CD8-positive, alpha-beta T cell (primary cell): ENCODE measurements at regions of chr2 and their contacts with region 1.

Region 1: DNA sequence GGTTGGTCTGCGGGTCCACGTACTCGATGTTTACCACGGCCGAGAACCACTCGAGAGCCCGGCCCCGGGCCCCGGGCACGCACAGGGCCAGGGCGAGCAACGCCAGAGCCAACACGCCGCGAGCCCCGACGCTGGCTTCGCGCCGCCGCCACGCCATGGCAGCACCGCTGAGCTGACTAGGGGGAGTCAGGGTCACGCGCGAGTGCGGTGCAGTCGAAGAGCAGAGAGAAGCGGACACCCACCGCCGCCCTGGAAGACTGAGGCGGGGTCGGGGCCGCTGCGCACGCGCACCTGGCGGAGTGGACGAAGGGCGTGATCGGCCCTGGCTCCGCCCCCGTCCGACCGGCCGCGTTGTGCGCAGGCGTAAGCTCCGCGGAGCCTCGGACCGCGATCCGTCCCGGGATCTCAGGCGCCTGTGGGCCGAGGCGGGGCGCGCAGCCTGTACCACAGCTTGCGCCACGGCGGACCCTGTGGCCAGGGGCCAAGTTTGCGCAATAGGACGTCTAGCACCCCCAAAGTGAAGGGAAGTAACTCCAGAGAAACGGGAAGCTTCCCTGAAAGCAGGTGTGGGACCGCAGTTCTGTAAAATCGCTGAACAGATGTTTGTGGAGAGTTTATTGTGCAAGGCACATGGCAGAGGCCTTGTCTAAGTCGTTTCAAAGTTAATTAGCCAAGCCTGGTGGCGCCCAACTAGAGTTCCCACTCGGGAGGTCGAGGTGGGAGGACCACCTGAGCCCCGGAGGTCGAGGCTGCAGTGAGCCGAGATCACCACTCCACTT is at the start of gene RNF149:
- DNase-seq: peak; percentile 80 to 97 (median 93)
- ATAC-seq: peak; percentile 64
- H3K4me3 ChIP-seq: peak within 1 kb of the TSS; percentile 75 to 88
- H3K4me3 Mint-ChIP-seq: peak within 1 kb of the TSS; percentile 92
- H3K27ac ChIP-seq: peak within 1 kb of the TSS; percentile 81 to 90
- H3K27ac Mint-ChIP-seq: peak within 1 kb of the TSS; percentile 99
- H3K4me1 ChIP-seq: peaks cover 72% of the 10 kb centered on the region
- H3K4me1 Mint-ChIP-seq: peaks cover 78% of the 10 kb centered on the region
- H3K27me3 ChIP-seq: no peaks in the 10 kb centered on the region
- H3K27me3 Mint-ChIP-seq: no peaks in the 10 kb centered on the region
- CTCF ChIP-seq: no peak
- total RNA-seq, gene RNF149: 128 to 129 TPM

Region 2: GRCh38 chr2:100562732-100563720 is 745.6 kb before region 1 on chr2 and contains the start of gene PDCL3:
- CTCF ChIA-PET with region 1: no interaction called
- POLR2A ChIA-PET with region 1: interaction called, 3 read pairs
- intact Hi-C with region 1: loop called in 1 of 2 experiments (anchors 5 kb)
- DNase-seq: peak; percentile 88 to 98 (median 94)
- ATAC-seq: peak; percentile 88
- H3K4me3 ChIP-seq: peak within 1 kb of the TSS; percentile 69 to 89
- H3K4me3 Mint-ChIP-seq: peak within 1 kb of the TSS; percentile 97
- H3K27ac ChIP-seq: peak within 1 kb of the TSS; percentile 84 to 87
- H3K27ac Mint-ChIP-seq: peak within 1 kb of the TSS; percentile 99
- H3K4me1 ChIP-seq: peaks cover 18% of the 10 kb centered on the region
- H3K4me1 Mint-ChIP-seq: peaks cover 39% of the 10 kb centered on the region
- H3K27me3 ChIP-seq: no peaks in the 10 kb centered on the region
- H3K27me3 Mint-ChIP-seq: no peaks in the 10 kb centered on the region
- CTCF ChIP-seq: no peak
- total RNA-seq, gene PDCL3: 32.4 to 33.5 TPM

Region 3: GRCh38 chr2:100580367-100581276 is 728.0 kb before region 1 on chr2:
- CTCF ChIA-PET with region 1: no interaction called
- POLR2A ChIA-PET with region 1: no interaction called
- intact Hi-C with region 1: loop called in 1 of 2 experiments (anchors 10 kb)
- DNase-seq: peak; percentile 37 to 91 (median 65)
- ATAC-seq: peak; percentile 77
- H3K4me3 ChIP-seq: peak overlapping the region; percentile 27 to 34
- H3K4me3 Mint-ChIP-seq: peak overlapping the region; percentile 68
- H3K27ac ChIP-seq: peak overlapping the region; percentile 75 to 87
- H3K27ac Mint-ChIP-seq: peak overlapping the region; percentile 99
- H3K4me1 ChIP-seq: peaks cover 35% of the 10 kb centered on the region
- H3K4me1 Mint-ChIP-seq: peaks cover 39% of the 10 kb centered on the region
- H3K27me3 ChIP-seq: no peaks in the 10 kb centered on the region
- H3K27me3 Mint-ChIP-seq: no peaks in the 10 kb centered on the region
- CTCF ChIP-seq: no peak

Region 4: DNA sequence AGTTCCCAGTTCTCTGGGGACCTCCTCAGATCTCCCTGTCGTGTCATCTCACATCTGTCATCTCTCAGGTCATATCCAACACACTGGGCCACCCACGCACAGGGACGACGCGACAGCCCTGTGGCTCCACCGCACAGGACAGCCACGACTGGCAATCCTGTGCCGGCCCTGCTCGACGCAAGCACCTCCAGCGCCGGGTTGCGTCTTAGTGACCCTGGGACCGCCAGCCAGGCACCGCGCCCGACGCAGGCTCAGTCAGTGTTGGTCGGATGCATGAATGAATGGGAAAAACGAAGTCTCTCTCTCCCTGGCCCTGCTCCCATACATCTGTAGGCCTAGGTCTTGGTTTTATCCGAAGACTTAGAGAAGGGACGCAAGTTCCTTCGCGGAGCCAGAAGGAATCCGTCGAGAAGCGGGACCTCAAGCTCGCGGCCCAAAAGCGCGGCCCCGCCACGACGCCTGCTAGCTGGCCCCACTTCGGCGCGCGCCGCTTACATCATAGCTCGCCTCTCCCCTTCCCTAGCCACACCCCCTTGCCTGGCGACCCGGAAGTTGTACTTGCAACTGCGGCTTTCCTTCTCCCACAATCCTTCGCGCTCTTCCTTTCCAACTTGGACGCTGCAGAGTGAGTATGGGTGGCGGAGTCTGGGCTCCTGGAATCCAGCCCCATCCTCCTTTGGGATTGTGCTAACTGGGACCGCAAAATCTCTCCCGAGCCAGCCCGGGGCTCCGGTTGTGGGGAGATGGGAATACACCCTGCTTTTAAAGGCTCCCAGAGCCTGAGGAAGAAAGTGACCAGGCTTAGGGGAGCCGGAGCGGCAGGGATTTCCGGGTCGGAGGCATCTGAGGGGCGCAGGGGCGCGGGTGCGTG is 306.7 kb before region 1 on chr2 and contains the start of gene RPL31:
- CTCF ChIA-PET with region 1: no interaction called
- POLR2A ChIA-PET with region 1: no interaction called
- intact Hi-C with region 1: loop called in 1 of 2 experiments (anchors 1 kb)
- DNase-seq: peak; percentile 90 to 98 (median 95)
- ATAC-seq: peak; percentile 97
- H3K4me3 ChIP-seq: peak within 1 kb of the TSS; percentile 92 to 95
- H3K4me3 Mint-ChIP-seq: peak within 1 kb of the TSS; percentile 95
- H3K27ac ChIP-seq: peak within 1 kb of the TSS; percentile 81 to 90
- H3K27ac Mint-ChIP-seq: peak within 1 kb of the TSS; percentile 98
- H3K4me1 ChIP-seq: peaks cover 27% of the 10 kb centered on the region
- H3K4me1 Mint-ChIP-seq: peaks cover 51% of the 10 kb centered on the region
- H3K27me3 ChIP-seq: no peaks in the 10 kb centered on the region
- H3K27me3 Mint-ChIP-seq: no peaks in the 10 kb centered on the region
- CTCF ChIP-seq: no peak
- total RNA-seq, gene RPL31: 2,776 to 2,895 TPM

Region 5: GRCh38 chr2:101267671-101268656 is 40.7 kb before region 1 on chr2:
- CTCF ChIA-PET with region 1: no interaction called
- POLR2A ChIA-PET with region 1: no interaction called
- intact Hi-C with region 1: loop called in 1 of 2 experiments (anchors 5 kb)
- DNase-seq: no peak
- ATAC-seq: no peak
- H3K4me3 ChIP-seq: no peak overlapping the region
- H3K4me3 Mint-ChIP-seq: no peak overlapping the region
- H3K27ac ChIP-seq: peak overlapping the region in 1 of 2 experiments; percentile 3
- H3K27ac Mint-ChIP-seq: peak overlapping the region; percentile 72
- H3K4me1 ChIP-seq: peaks cover 8% of the 10 kb centered on the region
- H3K4me1 Mint-ChIP-seq: peaks cover 48% of the 10 kb centered on the region
- H3K27me3 ChIP-seq: no peaks in the 10 kb centered on the region
- H3K27me3 Mint-ChIP-seq: no peaks in the 10 kb centered on the region
- CTCF ChIP-seq: no peak

Region 6: GRCh38 chr2:101328474-101329007 is 19.9 kb after region 1 on chr2:
- CTCF ChIA-PET with region 1: interaction called, 4 read pairs
- POLR2A ChIA-PET with region 1: interaction called, 35 read pairs
- intact Hi-C with region 1: loop called (anchors 1 to 2 kb)
- DNase-seq: peak in 5 of 9 experiments; percentile 29 to 81 (median 57)
- ATAC-seq: peak; percentile 77
- H3K4me3 ChIP-seq: peak overlapping the region in 1 of 2 experiments; percentile 14
- H3K4me3 Mint-ChIP-seq: no peak overlapping the region
- H3K27ac ChIP-seq: peak overlapping the region; percentile 37 to 84
- H3K27ac Mint-ChIP-seq: no peak overlapping the region
- H3K4me1 ChIP-seq: peaks cover 60% of the 10 kb centered on the region
- H3K4me1 Mint-ChIP-seq: peaks cover 15% of the 10 kb centered on the region
- H3K27me3 ChIP-seq: no peaks in the 10 kb centered on the region
- H3K27me3 Mint-ChIP-seq: no peaks in the 10 kb centered on the region
- CTCF ChIP-seq: no peak

Region 7: DNA sequence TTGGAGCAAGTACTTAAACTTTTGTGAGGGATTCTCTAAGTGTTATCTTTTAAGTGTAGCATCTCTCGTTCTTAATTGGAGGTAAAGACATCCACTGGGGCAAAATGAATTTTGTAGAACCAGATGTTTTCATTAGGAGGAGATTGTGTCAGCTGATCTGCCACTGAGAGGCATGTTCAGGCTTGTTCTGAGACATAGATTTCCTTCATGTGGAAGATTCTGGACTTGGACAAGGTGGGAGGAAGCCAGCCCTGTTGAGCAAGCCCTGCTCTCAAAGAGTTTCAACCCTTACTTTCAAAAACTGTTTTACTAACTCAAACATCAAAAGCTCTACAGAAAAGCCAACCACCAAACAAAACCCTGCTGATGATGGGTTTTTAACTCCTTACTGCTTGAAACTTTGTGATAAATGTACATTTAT is 395.4 kb after region 1 on chr2:
- CTCF ChIA-PET with region 1: no interaction called
- POLR2A ChIA-PET with region 1: no interaction called
- intact Hi-C with region 1: loop called (anchors 5 to 10 kb)
- DNase-seq: peak in 5 of 9 experiments; percentile 23 to 63 (median 43)
- ATAC-seq: peak; percentile 9
- H3K4me3 ChIP-seq: peak overlapping the region in 1 of 2 experiments; percentile 37
- H3K4me3 Mint-ChIP-seq: peak overlapping the region; percentile 83
- H3K27ac ChIP-seq: peak overlapping the region; percentile 34 to 76
- H3K27ac Mint-ChIP-seq: peak overlapping the region; percentile 93
- H3K4me1 ChIP-seq: peaks cover 84% of the 10 kb centered on the region
- H3K4me1 Mint-ChIP-seq: peaks cover 73% of the 10 kb centered on the region
- H3K27me3 ChIP-seq: no peaks in the 10 kb centered on the region
- H3K27me3 Mint-ChIP-seq: no peaks in the 10 kb centered on the region
- CTCF ChIP-seq: no peak